Heart left ventricle (tissue), 16 donors: ENCODE measurements at regions of chr12 and their contacts with region 1.

Region 1: GRCh38 chr12:57111031-57111734 is at the start of gene STAT6:
- DNase-seq: peak; percentile 86 to 87 (median 87)
- ATAC-seq: peak; percentile 70 to 86 (median 78)
- H3K4me3 ChIP-seq: peak within 1 kb of the TSS; percentile 21 to 88 (median 65)
- H3K27ac ChIP-seq: peak within 1 kb of the TSS; percentile 93 to 100 (median 99)
- H3K4me1 ChIP-seq: peaks cover 0 to 39% (median 17%) of the 10 kb centered on the region in 12 donors
- H3K27me3 ChIP-seq: no peaks in the 10 kb centered on the region
- CTCF ChIP-seq: peak in 2 of 12 donors; percentile 24 to 36
- POLR2A ChIP-seq: peak in 1 of 2 donors; percentile 45
- total RNA-seq, gene STAT6: 31.6 to 87.7 (median 37.6) TPM

Region 2: DNA sequence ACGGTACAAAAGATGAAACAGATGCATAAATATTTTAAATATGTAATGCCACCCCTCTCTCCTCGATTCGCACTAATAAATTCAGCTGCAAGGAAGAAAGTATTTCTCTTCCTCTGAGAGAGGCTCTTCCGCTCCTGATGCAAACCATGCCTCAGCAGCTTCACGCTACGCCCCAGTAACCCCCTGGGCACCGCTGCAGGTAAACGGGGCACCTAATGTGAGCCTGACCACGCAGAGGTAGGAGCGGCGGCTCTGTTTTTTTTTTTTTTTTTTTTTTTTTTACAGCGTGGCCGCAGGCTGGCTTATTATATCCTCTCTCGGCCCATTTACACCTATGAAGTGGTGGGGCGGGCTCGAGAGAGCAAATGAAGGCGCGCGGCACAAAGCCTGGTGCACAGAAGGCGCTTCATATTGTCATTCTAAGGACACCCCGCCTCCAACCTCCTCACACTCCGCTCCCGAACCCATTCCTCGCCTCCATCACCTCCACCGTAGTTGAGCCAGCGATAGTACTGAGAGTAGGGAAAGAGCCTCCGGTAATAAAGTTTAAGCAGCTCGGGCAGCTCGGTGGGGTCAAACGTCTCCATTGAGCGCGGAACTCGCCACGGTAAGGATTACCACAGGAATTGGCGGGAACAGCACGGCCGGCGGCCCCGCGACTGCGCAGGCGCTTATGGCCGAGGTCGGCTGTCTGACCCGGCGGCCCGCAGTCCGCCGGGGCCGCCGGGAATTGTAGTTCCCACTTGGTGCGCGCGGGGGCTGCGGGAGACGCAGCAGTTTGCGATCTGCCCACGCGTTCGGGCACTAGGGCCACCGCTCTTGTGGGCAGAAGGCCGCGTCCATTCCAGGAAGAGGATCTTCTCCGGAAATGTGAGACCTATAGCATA is 359.2 kb before region 1 on chr12 and contains the start of gene PRIM1:
- intact Hi-C with region 1: loop called in 1 of 10 experiments (anchors 10 kb)
- DNase-seq: peak; percentile 80 to 92 (median 84)
- ATAC-seq: peak; percentile 87 to 98 (median 97)
- H3K4me3 ChIP-seq: peak within 1 kb of the TSS; percentile 42 to 87 (median 76)
- H3K27ac ChIP-seq: peak within 1 kb of the TSS in 9 of 12 donors; percentile 31 to 79 (median 49)
- H3K4me1 ChIP-seq: peaks cover 0 to 35% (median 8%) of the 10 kb centered on the region in 12 donors
- H3K27me3 ChIP-seq: no peaks in the 10 kb centered on the region
- CTCF ChIP-seq: peak in 2 of 12 donors; percentile 16 to 41
- POLR2A ChIP-seq: peak in 1 of 2 donors; percentile 40
- total RNA-seq, gene PRIM1: 2.4 to 6.1 (median 3.3) TPM

Region 3: DNA sequence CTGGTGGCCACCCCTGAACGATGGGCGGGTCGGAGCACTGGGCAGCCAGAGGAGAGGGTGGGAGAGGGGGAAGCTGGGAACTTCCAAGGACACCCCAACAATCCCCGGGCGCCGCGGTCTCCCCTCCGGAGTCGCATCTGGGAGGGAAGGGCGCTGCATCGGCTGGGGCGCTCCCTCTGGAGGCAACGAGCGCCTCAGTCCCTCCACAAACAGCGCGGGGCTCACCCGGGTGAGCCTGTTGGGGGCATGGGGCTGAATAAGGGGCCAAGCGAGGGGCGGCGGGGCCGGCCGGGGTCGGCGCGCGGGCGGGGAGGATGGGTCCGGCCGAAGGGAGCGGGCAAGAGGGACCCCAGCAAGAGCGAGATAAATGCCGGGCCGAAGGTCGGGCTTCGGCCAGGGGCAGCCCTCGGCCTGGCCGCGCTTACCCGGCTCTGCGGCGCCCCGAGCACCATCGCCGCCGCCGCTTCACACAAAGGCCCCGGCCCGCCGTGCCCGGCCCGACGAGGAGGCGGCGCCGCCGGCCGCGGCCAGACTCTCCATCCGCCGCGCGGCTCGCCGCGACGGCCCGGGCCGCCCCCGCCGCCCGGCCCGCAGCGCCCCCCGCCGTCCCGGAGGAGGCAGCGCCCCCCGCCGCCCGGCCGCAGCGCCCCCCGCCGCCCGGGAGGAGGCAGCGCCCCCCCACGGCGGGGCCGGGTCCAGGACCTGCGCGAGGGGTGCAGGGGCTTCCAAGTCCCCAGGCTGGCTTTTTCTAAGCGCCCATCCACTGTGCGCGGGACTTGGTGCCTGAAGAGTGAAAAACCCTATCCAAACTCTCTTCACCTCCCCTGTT is 105.0 kb before region 1 on chr12 and contains the start of gene ZBTB39:
- intact Hi-C with region 1: loop called in 7 of 10 experiments (anchors 1 to 5 kb)
- DNase-seq: peak; percentile 58 to 84 (median 68)
- ATAC-seq: peak; percentile 52 to 89 (median 76)
- H3K4me3 ChIP-seq: peak within 1 kb of the TSS; percentile 83 to 100 (median 96)
- H3K27ac ChIP-seq: peak within 1 kb of the TSS; percentile 19 to 92 (median 84)
- H3K4me1 ChIP-seq: peaks cover 0 to 30% (median 23%) of the 10 kb centered on the region in 12 donors
- H3K27me3 ChIP-seq: no peaks in the 10 kb centered on the region
- CTCF ChIP-seq: peak; percentile 40 to 76 (median 66)
- POLR2A ChIP-seq: no peak
- total RNA-seq, gene ZBTB39: 2.7 to 4.5 (median 3.6) TPM

Region 4: GRCh38 chr12:57069523-57069922 is 41.7 kb before region 1 on chr12:
- intact Hi-C with region 1: loop called (anchors 1 to 2 kb)
- DNase-seq: peak in 4 of 5 donors; percentile 44 to 69 (median 65)
- ATAC-seq: peak; percentile 86 to 98 (median 96)
- H3K4me3 ChIP-seq: no peak overlapping the region
- H3K27ac ChIP-seq: peak overlapping the region in 9 of 12 donors; percentile 5 to 81 (median 40)
- H3K4me1 ChIP-seq: peaks cover 0 to 19% (median 3%) of the 10 kb centered on the region in 12 donors
- H3K27me3 ChIP-seq: no peaks in the 10 kb centered on the region
- CTCF ChIP-seq: peak; percentile 77 to 92 (median 89)
- POLR2A ChIP-seq: no peak

Region 5: GRCh38 chr12:57078519-57079404 is 32.4 kb before region 1 on chr12 and contains the start of gene NEMP1:
- intact Hi-C with region 1: loop called in 1 of 10 experiments (anchors 2 kb)
- DNase-seq: peak; percentile 94 to 98 (median 98)
- ATAC-seq: peak; percentile 100
- H3K4me3 ChIP-seq: peak within 1 kb of the TSS; percentile 29 to 88 (median 78)
- H3K27ac ChIP-seq: peak within 1 kb of the TSS; percentile 48 to 94 (median 78)
- H3K4me1 ChIP-seq: peaks cover 0 to 19% (median 10%) of the 10 kb centered on the region in 12 donors
- H3K27me3 ChIP-seq: no peaks in the 10 kb centered on the region
- CTCF ChIP-seq: no peak
- POLR2A ChIP-seq: peak in 1 of 2 donors; percentile 66
- total RNA-seq, gene NEMP1: 1.7 to 12.0 (median 3.6) TPM

Region 6: GRCh38 chr12:57088459-57089248 is 22.5 kb before region 1 on chr12 and contains the start of gene NAB2:
- intact Hi-C with region 1: loop called in 5 of 10 experiments (anchors 1 to 2 kb)
- DNase-seq: peak; percentile 97 to 98 (median 98)
- ATAC-seq: peak; percentile 77 to 87 (median 81)
- H3K4me3 ChIP-seq: peak within 1 kb of the TSS; percentile 52 to 97 (median 81)
- H3K27ac ChIP-seq: peak within 1 kb of the TSS; percentile 93 to 100 (median 99)
- H3K4me1 ChIP-seq: peaks cover 0 to 71% (median 44%) of the 10 kb centered on the region in 12 donors
- H3K27me3 ChIP-seq: no peaks in the 10 kb centered on the region
- CTCF ChIP-seq: no peak
- POLR2A ChIP-seq: peak in 1 of 2 donors; percentile 60
- total RNA-seq, gene NAB2: 8.7 to 20.3 (median 11.8) TPM

Region 7: GRCh38 chr12:57541001-57541400 is 429.8 kb after region 1 on chr12:
- intact Hi-C with region 1: no loop called
- DNase-seq: no peak
- ATAC-seq: no peak
- H3K4me3 ChIP-seq: no peak overlapping the region
- H3K27ac ChIP-seq: no peak overlapping the region
- H3K4me1 ChIP-seq: peaks cover 0 to 34% (median 20%) of the 10 kb centered on the region in 12 donors
- H3K27me3 ChIP-seq: no peaks in the 10 kb centered on the region
- CTCF ChIP-seq: no peak
- POLR2A ChIP-seq: no peak